Naive thymus-derived CD4-positive, alpha-beta T cell (primary cell): ENCODE measurements at regions of chr3 and their contacts with region 1.

Region 1: GRCh38 chr3:106176734-106177133 is 307.9 kb upstream of the CBLB start:
- DNase-seq: peak in 8 of 9 donors; percentile 59 to 86 (median 78)
- ATAC-seq: peak; percentile 94
- H3K4me3 ChIP-seq: peak overlapping the region; percentile 28
- H3K4me3 Mint-ChIP-seq: peak overlapping the region; percentile 1 to 79 (median 73)
- H3K27ac ChIP-seq: peak overlapping the region; percentile 43
- H3K27ac Mint-ChIP-seq: peak overlapping the region; percentile 50 to 91 (median 87)
- H3K4me1 ChIP-seq: peaks cover 28 to 32% of the 10 kb centered on the region in 2 donors
- H3K4me1 Mint-ChIP-seq: peaks cover 33 to 61% (median 56%) of the 10 kb centered on the region in 7 donors
- H3K27me3 ChIP-seq: no peaks in the 10 kb centered on the region
- H3K27me3 Mint-ChIP-seq: no peaks in the 10 kb centered on the region

Region 2: DNA sequence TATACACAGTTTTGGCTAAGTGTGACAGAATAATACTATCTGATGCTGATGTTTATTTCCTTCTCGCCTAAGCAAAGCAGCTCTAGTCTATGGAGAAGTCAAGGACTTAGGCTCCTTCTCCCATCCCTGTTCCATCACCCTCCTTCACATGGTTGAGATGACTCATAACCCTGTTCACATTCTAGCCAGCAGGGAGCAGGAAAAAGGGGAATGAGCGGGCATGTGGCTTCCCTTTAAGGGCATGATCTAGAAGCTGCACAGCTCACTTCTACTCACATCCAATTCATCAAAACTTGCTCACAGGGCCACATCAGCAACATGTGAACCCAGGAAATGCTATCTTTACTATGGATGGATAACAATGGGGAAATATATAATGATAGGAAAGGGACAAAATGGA is 348.8 kb before region 1 on chr3:
- CTCF ChIA-PET with region 1: no interaction called
- POLR2A ChIA-PET with region 1: no interaction called
- intact Hi-C with region 1: loop called in 1 of 2 experiments (anchors 1 kb)
- DNase-seq: no peak
- ATAC-seq: no peak
- H3K4me3 ChIP-seq: no peak overlapping the region
- H3K4me3 Mint-ChIP-seq: peak overlapping the region in 4 of 10 donors; percentile 29 to 52 (median 40)
- H3K27ac ChIP-seq: no peak overlapping the region
- H3K27ac Mint-ChIP-seq: peak overlapping the region in 4 of 9 donors; percentile 1 to 90 (median 20)
- H3K4me1 ChIP-seq: peaks cover 37 to 65% of the 10 kb centered on the region in 2 donors
- H3K4me1 Mint-ChIP-seq: peaks cover 57 to 92% (median 88%) of the 10 kb centered on the region in 7 donors
- H3K27me3 ChIP-seq: no peaks in the 10 kb centered on the region
- H3K27me3 Mint-ChIP-seq: no peaks in the 10 kb centered on the region

Region 3: DNA sequence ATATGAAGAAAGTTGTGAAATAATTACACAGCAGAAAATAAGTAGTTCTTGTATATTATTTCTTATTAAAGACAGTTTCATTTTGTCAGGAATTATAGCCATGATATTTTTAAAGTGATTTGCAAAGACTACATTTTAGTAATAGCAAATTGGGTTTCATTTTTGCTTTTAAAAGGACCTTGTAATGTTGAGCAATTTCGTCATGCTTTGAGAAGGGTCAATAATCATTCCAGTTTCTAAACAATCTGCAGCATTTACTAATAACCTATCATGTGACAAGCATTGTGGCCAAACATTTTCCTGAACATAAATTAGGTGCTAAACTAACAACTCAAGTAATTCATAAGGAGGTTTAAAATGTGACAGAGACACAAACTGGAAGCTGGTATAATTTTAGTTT is 93.5 kb before region 1 on chr3:
- CTCF ChIA-PET with region 1: no interaction called
- POLR2A ChIA-PET with region 1: no interaction called
- intact Hi-C with region 1: no loop called
- DNase-seq: no peak
- ATAC-seq: no peak
- H3K4me3 ChIP-seq: no peak overlapping the region
- H3K4me3 Mint-ChIP-seq: no peak overlapping the region
- H3K27ac ChIP-seq: no peak overlapping the region
- H3K27ac Mint-ChIP-seq: no peak overlapping the region
- H3K4me1 ChIP-seq: no peaks in the 10 kb centered on the region
- H3K4me1 Mint-ChIP-seq: peaks cover 0 to 15% (median 0%) of the 10 kb centered on the region in 7 donors
- H3K27me3 ChIP-seq: no peaks in the 10 kb centered on the region
- H3K27me3 Mint-ChIP-seq: no peaks in the 10 kb centered on the region

Region 4: GRCh38 chr3:106108925-106109324 is 67.8 kb before region 1 on chr3:
- CTCF ChIA-PET with region 1: no interaction called
- POLR2A ChIA-PET with region 1: no interaction called
- intact Hi-C with region 1: loop called in 1 of 2 experiments (anchors 5 kb)
- DNase-seq: no peak
- ATAC-seq: no peak
- H3K4me3 ChIP-seq: no peak overlapping the region
- H3K4me3 Mint-ChIP-seq: no peak overlapping the region
- H3K27ac ChIP-seq: no peak overlapping the region
- H3K27ac Mint-ChIP-seq: peak overlapping the region in 5 of 9 donors; percentile 11 to 59 (median 44)
- H3K4me1 ChIP-seq: peaks cover 3 to 9% of the 10 kb centered on the region in 2 donors
- H3K4me1 Mint-ChIP-seq: peaks cover 6 to 21% (median 13%) of the 10 kb centered on the region in 7 donors
- H3K27me3 ChIP-seq: no peaks in the 10 kb centered on the region
- H3K27me3 Mint-ChIP-seq: no peaks in the 10 kb centered on the region

Region 5: DNA sequence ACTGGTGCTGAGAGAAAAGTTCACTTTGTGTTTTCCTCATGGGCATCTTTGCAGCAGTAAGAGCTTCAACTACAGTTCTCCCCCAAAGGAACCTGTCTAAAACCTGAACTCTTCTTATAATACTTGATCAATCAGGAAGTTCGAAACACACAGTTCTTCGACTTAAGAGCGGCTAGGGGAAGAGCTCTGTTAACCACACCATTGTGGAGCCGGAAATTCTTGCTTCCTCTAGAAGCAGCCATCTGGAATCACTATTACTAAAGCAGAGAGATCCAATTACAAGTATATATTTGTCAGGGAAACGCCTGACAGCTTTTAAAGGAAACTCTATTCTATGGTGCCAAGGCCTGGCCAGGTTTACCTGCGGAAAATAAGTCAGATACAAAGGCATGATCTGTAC is 29.4 kb after region 1 on chr3:
- CTCF ChIA-PET with region 1: interaction called, 6 read pairs
- POLR2A ChIA-PET with region 1: interaction called, 4 read pairs
- intact Hi-C with region 1: loop called (anchors 1 kb)
- DNase-seq: peak in 7 of 9 donors; percentile 12 to 48 (median 36)
- ATAC-seq: peak; percentile 81
- H3K4me3 ChIP-seq: peak overlapping the region; percentile 19
- H3K4me3 Mint-ChIP-seq: peak overlapping the region; percentile 51 to 79 (median 72)
- H3K27ac ChIP-seq: peak overlapping the region; percentile 32
- H3K27ac Mint-ChIP-seq: peak overlapping the region; percentile 3 to 91 (median 76)
- H3K4me1 ChIP-seq: peaks cover 14 to 18% of the 10 kb centered on the region in 2 donors
- H3K4me1 Mint-ChIP-seq: peaks cover 13 to 47% (median 40%) of the 10 kb centered on the region in 7 donors
- H3K27me3 ChIP-seq: no peaks in the 10 kb centered on the region
- H3K27me3 Mint-ChIP-seq: no peaks in the 10 kb centered on the region

Region 6: DNA sequence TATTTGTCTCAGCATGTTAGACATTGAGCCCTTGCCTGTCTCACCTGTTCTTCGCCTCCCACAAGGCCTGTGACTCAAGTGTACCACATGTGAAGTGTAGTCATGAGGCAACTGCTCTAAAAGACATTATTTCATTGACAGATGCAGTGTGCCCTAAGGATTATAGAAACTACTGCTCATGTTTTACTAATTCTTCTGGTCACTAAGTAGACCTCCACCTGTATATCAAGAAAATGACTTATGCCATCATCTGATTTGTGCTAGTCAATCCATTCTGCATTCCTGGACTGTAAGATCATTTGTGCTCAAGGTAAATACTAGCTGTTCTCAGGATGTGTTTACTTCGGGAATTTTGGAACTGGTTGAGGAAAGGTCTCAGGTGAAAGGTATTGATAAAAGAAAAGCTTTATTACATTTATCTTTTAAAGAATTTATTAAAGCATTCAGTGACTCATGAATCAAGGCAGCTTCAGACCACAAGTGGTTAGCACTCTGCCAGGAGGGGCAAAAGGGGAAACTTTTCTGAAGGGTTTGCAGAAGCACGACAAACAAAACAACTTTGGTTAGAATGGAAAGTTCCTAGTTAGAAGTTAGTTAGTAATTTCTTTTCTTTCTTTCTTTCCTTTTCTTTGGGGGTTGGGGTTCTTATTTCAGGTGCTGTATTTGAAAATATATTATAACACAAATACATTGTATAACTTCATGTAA is 157.3 kb after region 1 on chr3:
- CTCF ChIA-PET with region 1: no interaction called
- POLR2A ChIA-PET with region 1: no interaction called
- intact Hi-C with region 1: loop called in 1 of 2 experiments (anchors 2 kb)
- DNase-seq: peak in 1 of 9 donors; percentile 45
- ATAC-seq: peak; percentile 47
- H3K4me3 ChIP-seq: no peak overlapping the region
- H3K4me3 Mint-ChIP-seq: peak overlapping the region in 1 of 10 donors; percentile 73
- H3K27ac ChIP-seq: no peak overlapping the region
- H3K27ac Mint-ChIP-seq: peak overlapping the region in 3 of 9 donors; percentile 47 to 86 (median 62)
- H3K4me1 ChIP-seq: peaks cover 0 to 47% of the 10 kb centered on the region in 2 donors
- H3K4me1 Mint-ChIP-seq: peaks cover 19 to 69% (median 38%) of the 10 kb centered on the region in 7 donors
- H3K27me3 ChIP-seq: no peaks in the 10 kb centered on the region
- H3K27me3 Mint-ChIP-seq: no peaks in the 10 kb centered on the region